CD8-positive, alpha-beta T cell (primary cell): ENCODE measurements at regions of chr2 and their contacts with region 1.

Region 1: DNA sequence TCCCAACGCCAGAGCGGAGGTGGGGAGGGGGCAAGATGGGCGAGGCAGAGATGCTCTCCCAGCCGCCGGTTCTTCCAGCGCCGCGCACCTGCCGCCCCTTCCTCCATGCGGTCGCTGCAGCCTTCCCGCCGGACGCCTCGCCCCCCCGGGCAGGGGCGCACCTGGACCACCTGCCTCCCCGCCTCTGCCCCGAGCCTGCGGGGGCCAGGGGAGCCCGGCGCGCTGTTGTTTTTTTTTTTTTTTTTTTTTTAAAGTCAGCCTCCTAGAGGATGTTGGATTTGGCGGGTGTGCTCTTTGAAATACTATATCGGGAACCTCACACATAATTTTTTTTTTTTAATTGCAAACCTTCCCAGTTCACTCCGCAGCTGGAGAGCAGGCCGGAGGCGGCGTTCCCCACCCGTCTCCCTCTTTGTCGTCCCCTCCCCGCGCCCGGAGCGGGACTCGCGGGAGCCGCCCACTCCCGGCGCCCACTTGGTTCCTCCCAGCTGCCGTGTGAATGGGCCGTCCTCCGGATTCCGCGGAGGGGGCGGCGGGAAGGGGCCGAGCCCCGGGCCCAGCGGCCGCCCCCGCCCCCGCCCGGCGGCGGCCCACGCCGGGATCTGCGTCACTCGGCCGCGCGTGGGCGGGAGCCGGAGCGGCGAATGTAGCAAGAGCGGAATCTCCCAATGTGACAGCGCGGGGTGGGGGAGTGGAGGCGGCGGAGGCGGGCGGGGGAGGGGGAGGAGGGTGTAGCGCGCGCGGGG is 421 bp upstream of the NAB1 start:
- DNase-seq: peak; percentile 80 to 97 (median 88)
- ATAC-seq: peak; percentile 81
- H3K4me3 ChIP-seq: peak overlapping the region; percentile 58 to 63
- H3K4me3 Mint-ChIP-seq: peak overlapping the region; percentile 84
- H3K27ac ChIP-seq: peak overlapping the region; percentile 63 to 84
- H3K27ac Mint-ChIP-seq: peak overlapping the region; percentile 88
- H3K4me1 ChIP-seq: peaks cover 26% of the 10 kb centered on the region
- H3K4me1 Mint-ChIP-seq: peaks cover 44% of the 10 kb centered on the region
- H3K27me3 ChIP-seq: no peaks in the 10 kb centered on the region
- H3K27me3 Mint-ChIP-seq: no peaks in the 10 kb centered on the region
- CTCF ChIP-seq: no peak

Region 2: DNA sequence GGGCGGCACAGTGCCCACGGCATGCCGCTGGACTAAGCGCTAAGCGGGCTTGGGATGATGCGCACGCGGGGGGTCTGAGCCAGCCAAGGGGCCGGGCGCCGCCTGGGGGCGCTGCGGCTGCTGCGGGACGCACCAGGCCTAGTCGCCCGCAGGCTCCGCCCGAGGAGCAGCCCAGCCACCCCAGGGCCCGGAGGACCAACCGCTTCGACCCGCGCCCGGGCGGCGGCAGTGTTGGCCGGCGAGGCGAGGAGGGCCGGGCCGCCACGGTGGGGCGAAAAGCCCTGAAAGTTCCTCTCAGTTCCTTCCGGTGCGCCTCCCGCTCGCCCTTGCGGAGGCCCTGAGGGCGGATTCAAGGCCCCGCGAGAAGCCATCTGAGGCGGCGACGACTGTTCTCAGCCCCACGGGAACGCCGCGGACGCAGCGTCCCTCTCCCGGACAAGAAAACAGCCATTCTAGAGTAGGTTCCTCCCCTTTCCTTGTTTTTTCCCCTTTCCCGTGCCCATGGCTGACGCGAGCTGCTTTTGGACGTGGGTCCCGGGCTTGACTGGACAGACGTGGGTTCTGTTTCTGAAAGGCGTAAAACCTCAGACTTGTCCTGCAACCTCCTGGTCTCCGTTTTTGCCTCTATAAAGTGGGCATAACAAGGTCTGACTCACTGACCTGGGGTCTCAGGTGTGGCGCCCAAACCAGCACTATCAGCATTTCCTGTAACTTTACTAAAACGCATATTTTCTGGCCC is 973.9 kb before region 1 on chr2 and contains the start of gene ANKAR:
- CTCF ChIA-PET with region 1: no interaction called
- POLR2A ChIA-PET with region 1: no interaction called
- intact Hi-C with region 1: loop called in 1 of 2 experiments (anchors 10 kb)
- DNase-seq: peak; percentile 64 to 91 (median 79)
- ATAC-seq: peak; percentile 91
- H3K4me3 ChIP-seq: peak within 1 kb of the TSS; percentile 81 to 88
- H3K4me3 Mint-ChIP-seq: peak within 1 kb of the TSS; percentile 91
- H3K27ac ChIP-seq: peak within 1 kb of the TSS; percentile 86 to 97
- H3K27ac Mint-ChIP-seq: peak within 1 kb of the TSS; percentile 99
- H3K4me1 ChIP-seq: peaks cover 11% of the 10 kb centered on the region
- H3K4me1 Mint-ChIP-seq: peaks cover 49% of the 10 kb centered on the region
- H3K27me3 ChIP-seq: no peaks in the 10 kb centered on the region
- H3K27me3 Mint-ChIP-seq: no peaks in the 10 kb centered on the region
- CTCF ChIP-seq: peak; percentile 72
- total RNA-seq, gene ANKAR: 7.3 to 9.2 TPM

Region 3: DNA sequence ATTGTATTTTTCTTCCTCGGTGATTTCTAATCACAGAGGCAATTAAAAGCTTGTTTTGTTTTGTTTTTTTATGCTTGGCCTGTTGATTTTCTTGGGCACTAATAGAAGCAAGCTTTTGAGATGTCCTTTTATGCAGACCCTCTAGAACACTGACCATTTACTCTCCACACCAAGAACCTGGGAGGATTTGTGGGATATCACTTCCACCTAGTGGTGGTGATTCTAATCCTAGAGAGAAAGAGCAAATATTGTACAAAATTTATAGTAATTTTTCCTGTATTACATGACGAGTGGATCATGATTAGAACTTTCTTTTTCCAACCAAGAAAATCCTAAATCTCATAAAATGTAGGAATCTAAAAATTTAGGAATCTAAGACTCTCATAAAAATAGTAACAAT is 137.4 kb before region 1 on chr2:
- CTCF ChIA-PET with region 1: no interaction called
- POLR2A ChIA-PET with region 1: no interaction called
- intact Hi-C with region 1: loop called in 1 of 2 experiments (anchors 5 kb)
- DNase-seq: no peak
- ATAC-seq: no peak
- H3K4me3 ChIP-seq: no peak overlapping the region
- H3K4me3 Mint-ChIP-seq: no peak overlapping the region
- H3K27ac ChIP-seq: no peak overlapping the region
- H3K27ac Mint-ChIP-seq: peak overlapping the region; percentile 62
- H3K4me1 ChIP-seq: peaks cover 9% of the 10 kb centered on the region
- H3K4me1 Mint-ChIP-seq: peaks cover 21% of the 10 kb centered on the region
- H3K27me3 ChIP-seq: no peaks in the 10 kb centered on the region
- H3K27me3 Mint-ChIP-seq: no peaks in the 10 kb centered on the region
- CTCF ChIP-seq: no peak

Region 4: GRCh38 chr2:191020221-191020741 is 371.8 kb after region 1 on chr2:
- CTCF ChIA-PET with region 1: no interaction called
- POLR2A ChIA-PET with region 1: no interaction called
- intact Hi-C with region 1: loop called (anchors 5 to 10 kb)
- DNase-seq: peak; percentile 82 to 98 (median 93)
- ATAC-seq: peak; percentile 72
- H3K4me3 ChIP-seq: peak overlapping the region; percentile 73 to 82
- H3K4me3 Mint-ChIP-seq: no peak overlapping the region
- H3K27ac ChIP-seq: peak overlapping the region; percentile 62 to 86
- H3K27ac Mint-ChIP-seq: no peak overlapping the region
- H3K4me1 ChIP-seq: peaks cover 52% of the 10 kb centered on the region
- H3K4me1 Mint-ChIP-seq: peaks cover 28% of the 10 kb centered on the region
- H3K27me3 ChIP-seq: no peaks in the 10 kb centered on the region
- H3K27me3 Mint-ChIP-seq: no peaks in the 10 kb centered on the region
- CTCF ChIP-seq: no peak